ENCODE measurements at regions of chr16 and their contacts with region 1.

Region 1: DNA sequence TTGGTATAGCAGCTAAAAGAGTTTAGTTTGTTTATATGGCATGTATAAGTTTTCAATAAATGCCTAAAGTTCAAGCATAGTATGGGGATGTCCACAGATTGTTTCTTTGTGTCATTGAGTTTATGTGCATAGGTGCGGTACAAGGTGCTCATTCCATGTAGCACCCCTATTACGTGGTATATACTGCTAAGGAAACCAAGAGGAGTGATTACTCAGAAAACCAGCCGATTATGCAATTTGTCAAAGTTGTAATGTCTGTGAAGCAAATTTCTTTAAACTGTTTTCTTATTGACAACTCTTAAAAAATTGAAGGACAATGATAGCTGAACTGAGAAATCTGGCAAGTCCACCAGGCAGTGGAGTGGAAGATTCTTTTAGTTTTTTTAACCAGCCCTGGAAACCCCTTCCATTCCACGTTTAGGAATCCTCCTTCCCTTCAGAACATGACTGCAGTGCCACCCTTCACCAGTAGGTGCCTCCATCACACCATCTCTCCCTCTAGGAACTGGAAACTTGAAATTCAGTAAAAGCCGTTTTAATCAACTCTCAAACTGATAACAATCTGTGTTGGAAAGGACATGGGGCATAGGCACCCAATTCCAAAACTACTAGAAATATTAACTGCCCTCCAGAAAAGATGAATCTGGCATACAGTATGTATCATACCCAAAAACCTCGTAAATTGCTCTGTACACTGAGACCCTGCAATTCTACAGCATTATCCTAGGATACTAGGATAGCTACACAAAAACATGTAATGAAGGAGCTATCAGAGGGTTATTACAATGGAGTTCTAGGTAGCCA is 43.5 kb downstream of the REXO5 start:
- DNase-seq: peak; percentile 74
- ATAC-seq: peak; percentile 36
- H3K4me3 ChIP-seq: no peak overlapping the region
- H3K27ac ChIP-seq: no peak overlapping the region
- H3K4me1 ChIP-seq: peaks cover 34% of the 10 kb centered on the region
- H3K27me3 ChIP-seq: no peaks in the 10 kb centered on the region
- CTCF ChIP-seq: peak; percentile 94

Region 2: GRCh38 chr16:20704281-20704680 is 145.5 kb before region 1 on chr16:
- CTCF ChIA-PET with region 1: no interaction called
- POLR2A ChIA-PET with region 1: no interaction called
- intact Hi-C with region 1: no loop called
- DNase-seq: peak; percentile 7
- ATAC-seq: no peak
- H3K4me3 ChIP-seq: no peak overlapping the region
- H3K27ac ChIP-seq: no peak overlapping the region
- H3K4me1 ChIP-seq: no peaks in the 10 kb centered on the region
- H3K27me3 ChIP-seq: peaks cover 11% of the 10 kb centered on the region
- CTCF ChIP-seq: no peak

Region 3: DNA sequence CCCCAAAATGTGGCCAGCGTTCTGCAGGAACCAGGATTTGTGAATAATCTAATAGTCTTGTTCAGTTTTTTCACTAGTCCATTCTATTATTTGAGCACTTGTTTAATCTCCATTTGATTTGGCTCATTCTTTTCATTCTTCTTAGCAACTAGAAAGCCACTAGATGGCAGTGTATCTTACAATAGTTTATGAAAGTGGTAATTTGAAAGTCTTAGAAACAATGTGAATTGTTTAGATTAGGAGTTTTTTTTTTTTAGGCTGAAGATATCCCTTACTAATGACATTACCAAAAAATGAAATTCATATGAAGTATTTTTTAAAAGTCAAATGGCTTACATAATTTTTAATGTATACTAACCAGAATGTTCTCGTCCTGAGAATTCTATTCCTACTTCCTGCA is 50.2 kb before region 1 on chr16:
- CTCF ChIA-PET with region 1: no interaction called
- POLR2A ChIA-PET with region 1: no interaction called
- intact Hi-C with region 1: no loop called
- DNase-seq: peak; percentile 13
- ATAC-seq: no peak
- H3K4me3 ChIP-seq: no peak overlapping the region
- H3K27ac ChIP-seq: no peak overlapping the region
- H3K4me1 ChIP-seq: peaks cover 11% of the 10 kb centered on the region
- H3K27me3 ChIP-seq: no peaks in the 10 kb centered on the region
- CTCF ChIP-seq: peak; percentile 58

Region 4: GRCh38 chr16:20900299-20901067 is 50.7 kb after region 1 on chr16 and contains the starts of genes DCUN1D3 and LYRM1:
- CTCF ChIA-PET with region 1: no interaction called
- POLR2A ChIA-PET with region 1: interaction called, 6 read pairs
- intact Hi-C with region 1: loop called (anchors 1 kb)
- DNase-seq: peak; percentile 92
- ATAC-seq: peak; percentile 77
- H3K4me3 ChIP-seq: peak within 1 kb of the TSS; percentile 96
- H3K27ac ChIP-seq: peak within 1 kb of the TSS; percentile 97
- H3K4me1 ChIP-seq: peaks cover 66% of the 10 kb centered on the region
- H3K27me3 ChIP-seq: no peaks in the 10 kb centered on the region
- CTCF ChIP-seq: no peak
- total RNA-seq, gene DCUN1D3: 8.5 and 10.5 TPM in 2 replicates
- total RNA-seq, gene LYRM1: 21.9 and 35.1 TPM in 2 replicates

Region 5: DNA sequence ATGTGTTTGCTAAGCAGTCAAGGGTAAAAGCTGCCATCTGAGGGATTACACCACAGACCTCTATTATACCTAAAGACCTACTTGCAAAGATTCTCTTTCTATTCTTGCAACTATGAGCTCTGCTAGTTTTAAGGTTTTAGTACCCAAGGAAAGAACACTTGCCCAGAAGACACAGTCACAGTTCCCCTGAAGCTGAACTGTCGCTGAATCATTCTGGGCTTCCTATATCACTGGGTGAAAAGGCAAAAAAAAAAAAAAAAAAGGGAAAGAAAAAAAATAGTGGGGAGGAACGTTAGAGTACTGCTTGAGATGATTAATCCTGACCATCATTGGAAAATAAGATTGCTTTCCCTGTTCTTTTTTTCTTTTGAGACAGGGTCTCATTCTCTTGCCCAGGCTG is 88.6 kb after region 1 on chr16:
- CTCF ChIA-PET with region 1: no interaction called
- POLR2A ChIA-PET with region 1: no interaction called
- intact Hi-C with region 1: loop called (anchors 1 kb)
- DNase-seq: peak; percentile 74
- ATAC-seq: peak; percentile 90
- H3K4me3 ChIP-seq: no peak overlapping the region
- H3K27ac ChIP-seq: peak overlapping the region; percentile 42
- H3K4me1 ChIP-seq: peaks cover 17% of the 10 kb centered on the region
- H3K27me3 ChIP-seq: no peaks in the 10 kb centered on the region
- CTCF ChIP-seq: no peak

Region 6: GRCh38 chr16:21083729-21084268 is 234.0 kb after region 1 on chr16:
- CTCF ChIA-PET with region 1: no interaction called
- POLR2A ChIA-PET with region 1: no interaction called
- intact Hi-C with region 1: loop called (anchors 1 kb)
- DNase-seq: peak; percentile 64
- ATAC-seq: peak; percentile 66
- H3K4me3 ChIP-seq: no peak overlapping the region
- H3K27ac ChIP-seq: no peak overlapping the region
- H3K4me1 ChIP-seq: peaks cover 7% of the 10 kb centered on the region
- H3K27me3 ChIP-seq: no peaks in the 10 kb centered on the region
- CTCF ChIP-seq: peak; percentile 79

Region 7: DNA sequence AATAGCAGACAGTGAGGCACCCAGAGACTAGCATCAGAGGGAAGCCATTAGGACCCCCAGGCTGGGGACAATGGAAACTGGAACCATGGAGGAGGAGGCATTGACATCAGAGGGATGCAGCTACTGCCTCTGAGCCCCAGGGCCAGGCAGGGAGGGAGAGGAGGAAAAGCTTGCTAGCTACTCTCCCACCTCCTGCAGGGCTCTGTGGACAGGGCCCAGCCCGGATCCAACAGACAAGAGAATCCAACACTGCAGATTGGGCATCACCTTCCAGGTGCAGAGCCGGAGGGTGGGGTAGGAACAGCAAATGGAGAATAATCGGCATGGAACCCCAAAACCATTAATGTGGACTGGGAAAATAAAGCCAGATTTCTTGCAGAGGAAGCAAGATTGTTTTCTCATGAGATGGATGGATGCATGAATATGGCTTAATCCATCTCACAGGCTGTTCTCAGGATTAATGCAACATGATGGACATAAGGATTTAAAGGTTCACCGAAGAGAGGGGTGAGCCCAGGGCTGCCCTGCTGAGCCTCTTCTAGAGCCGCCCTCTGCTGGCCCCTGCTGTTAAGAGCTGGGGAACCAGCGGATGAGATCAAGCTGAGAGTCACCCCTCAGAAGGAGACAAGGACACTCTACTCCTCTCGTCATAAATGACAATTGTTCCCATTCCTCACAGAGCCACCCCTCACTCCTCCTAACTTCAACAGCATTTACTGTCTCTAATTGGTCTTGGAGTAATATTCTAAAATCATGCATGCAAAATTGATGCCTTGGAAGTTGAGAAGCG is 252.0 kb after region 1 on chr16:
- CTCF ChIA-PET with region 1: interaction called, 5 read pairs
- POLR2A ChIA-PET with region 1: no interaction called
- intact Hi-C with region 1: loop called (anchors 5 kb)
- DNase-seq: peak; percentile 30
- ATAC-seq: peak; percentile 65
- H3K4me3 ChIP-seq: no peak overlapping the region
- H3K27ac ChIP-seq: no peak overlapping the region
- H3K4me1 ChIP-seq: peaks cover 9% of the 10 kb centered on the region
- H3K27me3 ChIP-seq: no peaks in the 10 kb centered on the region
- CTCF ChIP-seq: peak; percentile 55

Region 8: GRCh38 chr16:21300309-21301167 is 450.7 kb after region 1 on chr16:
- CTCF ChIA-PET with region 1: interaction called, 3 read pairs
- POLR2A ChIA-PET with region 1: interaction called, 3 read pairs
- intact Hi-C with region 1: loop called (anchors 2 kb)
- DNase-seq: peak; percentile 98
- ATAC-seq: peak; percentile 74
- H3K4me3 ChIP-seq: peak overlapping the region; percentile 81
- H3K27ac ChIP-seq: peak overlapping the region; percentile 75
- H3K4me1 ChIP-seq: peaks cover 15% of the 10 kb centered on the region
- H3K27me3 ChIP-seq: no peaks in the 10 kb centered on the region
- CTCF ChIP-seq: peak; percentile 86